ENCODE measurements at regions of chr10 and their contacts with region 1.

Region 1: DNA sequence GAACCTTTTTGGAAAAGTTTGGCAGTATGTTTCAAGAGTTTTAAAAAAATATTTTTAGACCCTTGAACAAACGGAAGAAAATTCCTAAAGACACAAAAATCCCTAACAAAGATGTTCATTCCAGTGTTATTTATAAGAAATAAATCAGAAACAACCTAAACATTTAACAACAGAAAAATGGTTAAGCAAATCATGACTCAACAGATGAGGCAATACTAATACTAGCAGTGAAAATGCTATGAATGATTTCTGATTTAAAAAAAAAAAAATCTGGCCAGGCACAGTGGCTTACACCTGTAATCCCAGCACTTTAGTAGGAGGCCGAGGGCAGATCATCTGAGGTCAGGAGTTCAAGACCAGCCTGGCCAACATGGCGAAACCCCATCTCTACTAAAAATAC is 61.0 kb downstream of the ARHGAP12 start:
- DNase-seq: no peak
- H3K4me3 ChIP-seq: no peak overlapping the region
- H3K27ac ChIP-seq: no peak overlapping the region
- H3K4me1 ChIP-seq: peaks cover 0 to 5% of the 10 kb centered on the region in 2 donors
- H3K27me3 ChIP-seq: no peaks in the 10 kb centered on the region
- CTCF ChIP-seq: no peak
- POLR2A ChIP-seq: no peak

Region 2: DNA sequence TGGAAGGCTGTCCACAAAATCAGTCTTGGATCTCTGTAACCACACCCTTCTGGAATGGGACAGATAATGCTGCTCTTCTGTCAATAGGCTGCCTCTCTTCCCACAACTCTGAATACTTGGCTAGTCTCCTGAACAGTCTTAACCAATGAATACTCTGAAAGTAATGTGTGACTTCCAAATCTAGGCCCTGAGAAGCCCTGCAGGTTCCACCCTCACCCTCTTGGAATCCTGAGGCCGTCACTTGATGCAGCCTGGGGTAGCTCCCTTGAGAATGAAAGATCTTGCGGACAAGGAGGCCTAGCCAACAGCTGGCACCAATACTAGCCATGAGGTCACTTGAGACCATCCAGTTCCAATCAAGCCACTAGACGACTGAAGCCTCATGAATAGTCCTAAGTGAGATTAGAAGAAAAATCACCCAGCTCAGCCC is 48.2 kb before region 1 on chr10:
- intact Hi-C with region 1: no loop called
- DNase-seq: no peak
- H3K4me3 ChIP-seq: no peak overlapping the region
- H3K27ac ChIP-seq: no peak overlapping the region
- H3K4me1 ChIP-seq: no peaks in the 10 kb centered on the region
- H3K27me3 ChIP-seq: no peaks in the 10 kb centered on the region
- CTCF ChIP-seq: no peak
- POLR2A ChIP-seq: no peak

Region 3: DNA sequence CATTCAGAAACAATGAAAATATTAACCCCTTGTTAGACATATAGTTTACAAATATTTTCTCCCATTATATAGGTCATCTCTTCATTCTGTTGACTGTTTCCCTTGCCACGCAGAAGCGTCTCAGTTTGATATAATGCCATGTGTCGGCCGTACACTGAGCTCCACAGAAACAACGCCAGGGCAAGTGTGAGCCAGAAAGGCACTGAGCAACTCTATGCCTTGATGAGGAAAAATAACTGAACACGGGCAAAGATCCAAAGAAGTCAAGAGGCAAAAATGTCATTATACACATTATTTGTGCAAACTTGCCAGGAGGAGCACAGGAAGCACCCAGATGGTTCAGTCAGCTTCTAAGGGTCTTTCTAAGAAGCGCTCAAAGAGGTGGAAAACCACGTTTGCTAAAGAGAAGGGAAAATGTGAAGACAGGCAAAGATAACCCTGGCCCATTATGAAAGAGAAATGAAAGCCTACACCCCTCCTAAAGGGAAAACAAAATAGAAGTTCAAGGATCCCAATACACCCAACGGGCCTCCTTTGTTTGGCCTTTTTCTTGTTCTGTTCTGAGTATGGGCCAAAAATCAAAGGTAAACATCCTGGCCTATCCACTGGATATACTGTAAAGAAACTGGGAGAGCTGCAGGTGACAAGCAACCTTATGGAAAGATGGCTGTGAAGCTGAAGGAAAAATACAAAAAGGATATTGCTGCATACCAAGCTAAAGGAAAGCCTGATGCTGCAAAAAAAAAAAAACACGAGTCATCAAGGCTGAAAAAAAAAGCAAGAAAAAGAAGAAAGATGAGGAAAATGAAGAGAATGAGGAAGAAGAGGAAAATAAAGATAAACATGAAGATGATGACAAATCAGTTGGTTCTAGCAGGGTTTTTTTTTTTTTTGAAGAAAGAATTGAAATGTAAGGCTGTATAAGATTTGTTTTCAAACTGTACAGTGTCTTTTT is 45.5 kb after region 1 on chr10:
- intact Hi-C with region 1: loop called (anchors 2 kb)
- DNase-seq: no peak
- H3K4me3 ChIP-seq: peak overlapping the region in 1 of 3 donors; percentile 34
- H3K27ac ChIP-seq: peak overlapping the region; percentile 23 to 37
- H3K4me1 ChIP-seq: no peaks in the 10 kb centered on the region
- H3K27me3 ChIP-seq: no peaks in the 10 kb centered on the region
- CTCF ChIP-seq: no peak
- POLR2A ChIP-seq: no peak